Caco-2 (cell line): ENCODE measurements at regions of chr3 and their contacts with region 1.

Region 1: GRCh38 chr3:155744626-155745324 is at the start of gene PLCH1:
- DNase-seq: peak; percentile 82 to 83
- H3K4me3 ChIP-seq: peak within 1 kb of the TSS; percentile 94
- H3K4me3 Mint-ChIP-seq: peak within 1 kb of the TSS; percentile 99
- H3K27ac Mint-ChIP-seq: peak within 1 kb of the TSS; percentile 93
- H3K4me1 ChIP-seq: peaks cover 29% of the 10 kb centered on the region
- H3K4me1 Mint-ChIP-seq: peaks cover 41% of the 10 kb centered on the region
- H3K27me3 ChIP-seq: no peaks in the 10 kb centered on the region
- H3K27me3 Mint-ChIP-seq: no peaks in the 10 kb centered on the region
- CTCF ChIP-seq: no peak
- total RNA-seq, gene PLCH1: 2.8 and 3.1 TPM in 2 replicates

Region 2: DNA sequence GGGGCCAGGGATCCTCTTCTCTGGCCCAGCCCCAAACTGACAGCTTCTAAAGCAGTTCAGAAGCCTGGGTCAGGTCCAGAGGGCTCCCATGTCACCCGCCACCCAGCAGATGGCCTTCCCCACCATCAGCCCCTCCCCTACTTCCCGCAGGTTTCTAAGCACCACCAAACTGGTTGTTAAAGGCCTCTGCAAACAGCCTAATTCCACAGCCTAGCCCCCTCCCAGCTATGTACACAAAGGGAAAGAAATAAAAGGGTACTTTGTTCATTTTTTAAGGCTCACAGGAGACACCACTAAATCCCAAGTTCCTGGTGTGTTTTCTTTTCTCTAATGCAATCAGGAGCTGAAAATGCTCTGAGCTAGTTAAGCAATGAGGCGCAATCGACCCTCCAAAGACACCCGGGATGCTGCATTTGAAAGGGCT is 30.5 kb before region 1 on chr3:
- CTCF ChIA-PET with region 1: interaction called, 7 read pairs
- POLR2A ChIA-PET with region 1: no interaction called
- intact Hi-C with region 1: loop called (anchors 1 kb)
- DNase-seq: peak; percentile 81
- H3K4me3 ChIP-seq: no peak overlapping the region
- H3K4me3 Mint-ChIP-seq: no peak overlapping the region
- H3K27ac Mint-ChIP-seq: no peak overlapping the region
- H3K4me1 ChIP-seq: peaks cover 16% of the 10 kb centered on the region; the same call in 1 of the 2 replicates
- H3K4me1 Mint-ChIP-seq: peaks cover 9% of the 10 kb centered on the region
- H3K27me3 ChIP-seq: no peaks in the 10 kb centered on the region
- H3K27me3 Mint-ChIP-seq: no peaks in the 10 kb centered on the region
- CTCF ChIP-seq: peak in 1 of 2 experiments; percentile 38

Region 3: DNA sequence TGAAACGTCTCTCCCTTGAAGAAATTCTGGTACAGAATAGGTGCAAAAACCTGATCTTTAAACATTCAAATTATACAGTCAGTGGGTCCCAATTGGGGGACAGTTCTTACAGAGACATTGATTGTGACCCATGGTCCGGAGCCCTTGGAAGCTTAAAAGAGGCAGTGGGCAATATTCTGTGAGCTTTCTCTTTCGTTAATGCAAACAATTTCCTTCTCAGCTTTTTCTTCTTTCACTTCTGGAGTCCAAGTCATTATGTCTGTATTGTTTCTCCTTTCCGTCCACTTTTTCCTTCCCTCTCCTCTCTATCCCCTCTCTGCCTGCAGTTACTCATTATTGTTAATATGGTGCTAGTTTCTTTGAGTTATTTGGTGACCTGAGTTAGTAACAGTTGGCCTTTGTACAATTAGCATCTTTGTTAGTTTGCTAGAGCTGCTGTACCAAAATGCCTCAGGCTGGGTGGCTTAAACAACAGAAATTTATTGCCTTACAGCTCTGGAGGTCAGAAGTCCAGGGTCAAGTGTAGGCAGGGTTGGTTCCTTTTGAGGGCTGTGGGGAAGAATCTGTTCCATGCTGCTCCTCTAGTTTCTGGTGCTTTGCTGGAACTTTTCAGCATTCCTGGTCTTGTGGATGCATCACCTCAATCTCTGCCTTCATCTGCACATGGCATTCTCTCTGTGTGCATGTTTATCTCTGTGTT is 228.3 kb after region 1 on chr3:
- CTCF ChIA-PET with region 1: no interaction called
- POLR2A ChIA-PET with region 1: no interaction called
- intact Hi-C with region 1: no loop called
- DNase-seq: no peak
- H3K4me3 ChIP-seq: no peak overlapping the region
- H3K4me3 Mint-ChIP-seq: no peak overlapping the region
- H3K27ac Mint-ChIP-seq: no peak overlapping the region
- H3K4me1 ChIP-seq: no peaks in the 10 kb centered on the region
- H3K4me1 Mint-ChIP-seq: no peaks in the 10 kb centered on the region
- H3K27me3 ChIP-seq: no peaks in the 10 kb centered on the region
- H3K27me3 Mint-ChIP-seq: no peaks in the 10 kb centered on the region
- CTCF ChIP-seq: no peak